SK-MEL-5 (cell line): ENCODE measurements at regions of chr9 and their contacts with region 1.

Region 1: DNA sequence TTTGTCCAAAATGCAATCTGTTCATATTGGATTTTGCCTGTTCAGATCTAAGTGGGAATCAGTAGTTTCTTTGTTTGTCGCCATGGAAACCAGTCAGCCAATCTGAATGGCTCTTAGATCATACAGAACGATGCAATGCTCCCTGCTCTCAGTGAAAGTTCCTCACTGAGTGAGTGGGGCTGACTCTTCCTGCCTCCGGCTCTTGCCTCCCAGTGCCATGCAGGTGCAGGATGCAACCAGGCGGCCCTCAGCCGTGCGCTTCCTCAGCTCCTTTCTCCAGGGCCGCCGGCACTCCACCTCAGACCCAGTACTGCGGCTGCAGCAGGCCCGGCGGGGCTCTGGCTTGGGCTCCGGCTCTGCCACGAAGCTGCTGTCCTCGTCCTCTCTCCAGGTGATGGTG is at the start of gene PTPDC1:
- DNase-seq: peak; percentile 62
- total RNA-seq, gene PTPDC1: 10.6 and 11.8 TPM in 2 replicates

Region 2: GRCh38 chr9:93958819-93959682 is 125.3 kb before region 1 on chr9:
- in situ Hi-C with region 1: no loop called
- DNase-seq: no peak

Region 3: GRCh38 chr9:94178927-94179326 is 94.6 kb after region 1 on chr9:
- in situ Hi-C with region 1: loop called (anchors 10 kb)
- DNase-seq: no peak